A673 (cell line): ENCODE measurements at regions of chr12 and their contacts with region 1.

Region 1: DNA sequence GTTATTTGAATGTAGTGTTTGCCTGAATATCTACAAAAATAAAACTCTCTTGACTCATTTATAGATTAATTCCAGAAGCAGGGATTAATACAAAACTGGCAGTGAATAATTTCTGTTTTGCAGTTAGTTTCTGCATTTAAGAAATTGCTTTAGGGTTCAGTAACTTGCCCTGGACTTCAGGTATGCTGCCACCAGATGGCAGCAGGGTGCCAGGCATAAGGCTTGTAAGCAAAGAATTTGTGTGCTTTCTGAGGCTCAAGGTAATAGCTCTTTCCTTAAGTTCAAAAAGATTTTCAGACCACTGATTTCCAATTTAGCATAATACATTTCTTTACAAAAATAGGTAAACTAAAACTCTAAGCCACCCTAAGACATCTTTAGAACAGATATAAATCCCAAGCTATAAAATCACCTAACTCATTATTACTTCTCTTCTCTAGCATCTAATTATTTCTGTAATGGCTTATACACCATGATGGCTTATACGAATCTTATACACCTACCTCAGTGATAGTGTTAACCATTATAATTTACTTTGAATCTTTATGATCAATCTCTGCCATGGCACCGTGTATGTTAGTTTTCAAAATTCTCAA is 398.3 kb downstream of the APAF1 start:
- DNase-seq: peak; percentile 76
- H3K4me3 ChIP-seq: no peak overlapping the region
- H3K27ac ChIP-seq: no peak overlapping the region
- H3K4me1 ChIP-seq: no peaks in the 10 kb centered on the region
- H3K27me3 ChIP-seq: no peaks in the 10 kb centered on the region
- CTCF ChIP-seq: peak; percentile 94

Region 2: GRCh38 chr12:97837401-97837800 is 1206.0 kb before region 1 on chr12:
- CTCF ChIA-PET with region 1: no interaction called
- POLR2A ChIA-PET with region 1: no interaction called
- intact Hi-C with region 1: no loop called
- DNase-seq: no peak
- H3K4me3 ChIP-seq: no peak overlapping the region
- H3K27ac ChIP-seq: no peak overlapping the region
- H3K4me1 ChIP-seq: no peaks in the 10 kb centered on the region
- H3K27me3 ChIP-seq: no peaks in the 10 kb centered on the region
- CTCF ChIP-seq: no peak

Region 3: GRCh38 chr12:99170037-99170436 is 126.6 kb after region 1 on chr12:
- CTCF ChIA-PET with region 1: no interaction called
- POLR2A ChIA-PET with region 1: no interaction called
- intact Hi-C with region 1: loop called (anchors 5 kb)
- DNase-seq: no peak
- H3K4me3 ChIP-seq: no peak overlapping the region
- H3K27ac ChIP-seq: no peak overlapping the region
- H3K4me1 ChIP-seq: no peaks in the 10 kb centered on the region
- H3K27me3 ChIP-seq: peaks cover 14% of the 10 kb centered on the region
- CTCF ChIP-seq: no peak

Region 4: GRCh38 chr12:99386907-99387306 is 343.5 kb after region 1 on chr12:
- CTCF ChIA-PET with region 1: interaction called, 3 read pairs
- POLR2A ChIA-PET with region 1: no interaction called
- intact Hi-C with region 1: loop called (anchors 5 kb)
- DNase-seq: peak; percentile 71
- H3K4me3 ChIP-seq: no peak overlapping the region
- H3K27ac ChIP-seq: no peak overlapping the region
- H3K4me1 ChIP-seq: no peaks in the 10 kb centered on the region
- H3K27me3 ChIP-seq: peaks cover 3% of the 10 kb centered on the region
- CTCF ChIP-seq: peak; percentile 65

Region 5: GRCh38 chr12:99619389-99620158 is 576.2 kb after region 1 on chr12:
- CTCF ChIA-PET with region 1: interaction called, 3 read pairs
- POLR2A ChIA-PET with region 1: no interaction called
- intact Hi-C with region 1: loop called (anchors 1 kb)
- DNase-seq: peak; percentile 61
- H3K4me3 ChIP-seq: no peak overlapping the region
- H3K27ac ChIP-seq: no peak overlapping the region
- H3K4me1 ChIP-seq: no peaks in the 10 kb centered on the region
- H3K27me3 ChIP-seq: no peaks in the 10 kb centered on the region
- CTCF ChIP-seq: peak; percentile 87

Region 6: GRCh38 chr12:99658671-99659349 is 615.4 kb after region 1 on chr12:
- CTCF ChIA-PET with region 1: no interaction called
- POLR2A ChIA-PET with region 1: no interaction called
- intact Hi-C with region 1: loop called (anchors 2 kb)
- DNase-seq: peak; percentile 1
- H3K4me3 ChIP-seq: no peak overlapping the region
- H3K27ac ChIP-seq: no peak overlapping the region
- H3K4me1 ChIP-seq: no peaks in the 10 kb centered on the region
- H3K27me3 ChIP-seq: no peaks in the 10 kb centered on the region
- CTCF ChIP-seq: peak; percentile 48; the same call in 1 of the 2 replicates

Region 7: DNA sequence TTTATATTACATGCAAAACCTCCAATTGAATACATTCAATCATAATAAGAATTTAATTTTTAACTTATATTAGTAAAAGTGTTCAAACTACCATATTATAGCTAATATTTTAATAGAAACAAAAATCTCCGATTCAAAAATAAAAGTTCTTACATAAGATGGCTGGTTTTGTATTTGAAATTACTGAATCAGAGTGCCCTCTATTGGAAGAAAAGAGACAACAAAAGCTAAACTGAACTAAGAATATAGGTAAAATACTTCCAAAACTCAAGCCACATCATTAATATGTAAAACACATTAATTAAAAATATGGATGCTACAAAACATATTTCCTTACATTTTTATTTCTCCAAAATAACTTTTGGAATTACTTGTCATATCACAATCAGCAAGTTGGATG is 724.4 kb after region 1 on chr12:
- CTCF ChIA-PET with region 1: no interaction called
- POLR2A ChIA-PET with region 1: no interaction called
- intact Hi-C with region 1: loop called (anchors 5 kb)
- DNase-seq: peak; percentile 36
- H3K4me3 ChIP-seq: no peak overlapping the region
- H3K27ac ChIP-seq: no peak overlapping the region
- H3K4me1 ChIP-seq: no peaks in the 10 kb centered on the region
- H3K27me3 ChIP-seq: peaks cover 25% of the 10 kb centered on the region
- CTCF ChIP-seq: peak; percentile 64